Transverse colon (tissue), 4 donors: ENCODE measurements at regions of chr17 and their contacts with region 1.

Region 1: GRCh38 chr17:46995841-46996571 is 17.0 kb upstream of the RPRML start:
- DNase-seq: no peak
- H3K4me3 ChIP-seq: no peak overlapping the region
- H3K27ac ChIP-seq: no peak overlapping the region
- H3K4me1 ChIP-seq: no peaks in the 10 kb centered on the region
- H3K27me3 ChIP-seq: no peaks in the 10 kb centered on the region
- CTCF ChIP-seq: no peak
- EP300 ChIP-seq: no peak
- POLR2A ChIP-seq: no peak

Region 2: DNA sequence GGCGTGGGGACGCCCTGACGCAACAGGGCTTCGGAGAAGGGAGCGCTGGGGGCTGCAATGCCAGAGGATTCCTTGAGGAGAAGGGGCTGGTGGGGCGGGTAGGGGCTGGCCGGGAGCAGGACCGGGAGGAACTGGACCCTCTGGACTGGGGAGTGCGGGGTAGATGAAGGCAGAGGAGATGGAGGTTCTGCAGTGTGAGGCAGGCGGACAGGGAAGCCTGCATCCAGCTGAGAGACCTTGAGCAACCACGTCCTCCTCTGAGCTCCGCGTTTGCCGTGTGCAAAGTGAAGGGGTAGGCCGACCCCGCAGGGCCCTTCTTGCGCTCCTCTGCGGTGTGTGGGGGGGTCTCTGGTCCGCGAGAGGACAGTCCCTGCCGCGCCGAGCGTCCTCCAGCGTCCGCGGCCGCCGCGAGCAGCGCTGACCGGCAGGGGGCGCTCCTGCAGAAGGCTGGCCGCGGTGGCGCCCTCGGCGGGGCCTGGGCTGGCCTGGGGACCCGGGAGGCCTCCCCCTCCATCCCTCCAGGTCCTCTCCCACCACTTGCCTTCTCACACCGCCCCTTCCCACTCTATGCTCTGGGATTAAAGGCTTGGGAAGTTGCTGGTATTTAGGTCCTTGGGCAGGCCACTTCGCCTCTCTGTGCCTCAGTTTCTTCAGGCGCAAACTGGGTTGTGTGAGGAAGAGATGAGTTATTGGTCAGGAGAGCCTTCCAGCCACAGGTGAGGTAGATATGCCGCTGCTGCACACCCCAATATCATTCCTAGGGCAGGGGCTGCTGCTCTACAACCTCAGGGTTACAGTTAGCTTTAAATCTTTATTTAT is 154.2 kb before region 1 on chr17:
- in situ Hi-C with region 1: no loop called
- intact Hi-C with region 1: loop called (anchors 10 kb)
- DNase-seq: no peak
- H3K4me3 ChIP-seq: no peak overlapping the region
- H3K27ac ChIP-seq: no peak overlapping the region
- H3K4me1 ChIP-seq: peaks cover 0 to 3% (median 0%) of the 10 kb centered on the region in 4 donors
- H3K27me3 ChIP-seq: peaks cover 39% of the 10 kb centered on the region
- CTCF ChIP-seq: peak; percentile 21 to 80 (median 62)
- EP300 ChIP-seq: no peak
- POLR2A ChIP-seq: no peak

Region 3: DNA sequence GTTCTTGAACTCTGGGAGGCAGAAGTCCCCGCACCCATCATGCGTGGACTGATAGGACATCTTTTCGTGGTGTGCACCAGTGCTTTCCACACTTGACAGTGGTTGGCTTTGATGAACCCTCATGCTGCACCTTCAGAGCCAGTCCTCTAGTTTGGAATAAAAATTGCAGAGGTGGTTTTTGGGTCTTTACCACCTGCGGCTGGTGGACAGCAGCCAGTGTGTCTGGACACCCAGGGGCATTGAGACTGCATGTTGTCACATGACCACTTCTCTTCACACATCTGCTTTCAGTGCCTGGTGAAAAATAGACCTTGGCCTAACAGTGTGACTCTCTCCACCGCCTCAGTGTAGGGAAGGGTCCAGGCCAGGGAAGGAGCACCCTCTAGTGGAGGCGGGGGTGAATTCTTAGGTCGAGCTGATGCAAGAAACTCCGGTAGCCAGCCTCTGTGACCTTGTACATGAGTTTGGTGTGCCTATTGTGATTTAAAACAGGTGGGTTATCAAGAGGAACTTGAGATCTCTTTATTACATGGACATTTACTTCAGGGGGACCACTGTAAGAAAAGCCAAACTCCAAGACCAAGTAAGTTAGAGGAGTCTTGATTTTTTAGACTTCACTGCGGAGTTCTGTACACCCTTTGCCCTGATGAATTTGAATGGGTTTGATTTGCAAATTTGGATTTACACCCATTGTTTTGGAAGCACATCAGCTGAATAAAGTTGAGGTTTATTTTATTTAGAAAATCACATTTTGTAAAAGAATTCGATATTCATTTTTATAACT is 55.2 kb before region 1 on chr17:
- in situ Hi-C with region 1: loop called in 2 of 4 experiments (anchors 5 to 10 kb)
- intact Hi-C with region 1: loop called (anchors 10 kb)
- DNase-seq: peak; percentile 72
- H3K4me3 ChIP-seq: no peak overlapping the region
- H3K27ac ChIP-seq: no peak overlapping the region
- H3K4me1 ChIP-seq: peaks cover 6 to 14% (median 10%) of the 10 kb centered on the region in 4 donors
- H3K27me3 ChIP-seq: no peaks in the 10 kb centered on the region
- CTCF ChIP-seq: peak; percentile 66 to 82 (median 73)
- EP300 ChIP-seq: no peak
- POLR2A ChIP-seq: no peak